HepG2 (cell line): ENCODE measurements at regions of chr4 and their contacts with region 1.

Region 1: DNA sequence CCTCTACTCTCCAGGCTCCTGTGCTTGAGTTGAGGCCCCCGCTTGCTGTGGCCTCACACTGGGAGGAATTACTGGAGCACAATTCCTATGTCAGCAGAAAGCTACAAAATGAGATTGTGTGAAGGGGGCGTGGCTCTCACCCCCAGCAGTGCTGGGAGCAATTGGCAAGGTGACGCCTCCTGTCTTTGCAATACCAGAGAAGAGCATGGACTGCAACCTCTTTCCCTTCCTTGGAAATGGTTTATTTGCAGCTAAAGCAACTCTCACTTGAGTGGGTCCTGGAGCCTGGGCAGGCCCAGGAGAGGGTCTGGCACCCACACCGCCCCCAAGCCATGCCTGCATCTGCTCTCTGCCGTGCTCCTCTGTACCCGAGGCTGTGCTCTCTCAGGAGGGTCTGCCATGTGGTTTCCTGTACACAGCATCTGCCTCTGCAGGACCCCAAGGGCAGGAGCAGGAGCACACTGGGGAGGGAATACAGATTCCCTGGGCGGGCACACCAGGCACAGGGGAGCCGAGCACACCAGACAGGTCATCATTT is 32.9 kb upstream of the HGFAC start:
- DNase-seq: no peak
- ATAC-seq: peak; percentile 26
- H3K4me3 ChIP-seq: no peak overlapping the region
- H3K27ac ChIP-seq: peak overlapping the region; percentile 96
- H3K4me1 ChIP-seq: peaks cover 50% of the 10 kb centered on the region
- H3K27me3 ChIP-seq: no peaks in the 10 kb centered on the region
- CTCF ChIP-seq: no peak
- EP300 ChIP-seq: no peak
- POLR2A ChIP-seq: no peak
- RAD21 ChIP-seq: no peak

Region 2: GRCh38 chr4:3355266-3355748 is 53.6 kb before region 1 on chr4:
- CTCF ChIA-PET with region 1: no interaction called
- POLR2A ChIA-PET with region 1: interaction called, 25 read pairs
- in situ Hi-C with region 1: no loop called
- intact Hi-C with region 1: loop called (anchors 1 kb)
- DNase-seq: no peak
- ATAC-seq: no peak
- H3K4me3 ChIP-seq: peak overlapping the region in 1 of 3 experiments; percentile 49; a peak in 1 of 6 replicates
- H3K27ac ChIP-seq: peak overlapping the region; percentile 92
- H3K4me1 ChIP-seq: peaks cover 56% of the 10 kb centered on the region
- H3K27me3 ChIP-seq: no peaks in the 10 kb centered on the region
- CTCF ChIP-seq: no peak
- EP300 ChIP-seq: no peak
- POLR2A ChIP-seq: no peak
- RAD21 ChIP-seq: no peak

Region 3: DNA sequence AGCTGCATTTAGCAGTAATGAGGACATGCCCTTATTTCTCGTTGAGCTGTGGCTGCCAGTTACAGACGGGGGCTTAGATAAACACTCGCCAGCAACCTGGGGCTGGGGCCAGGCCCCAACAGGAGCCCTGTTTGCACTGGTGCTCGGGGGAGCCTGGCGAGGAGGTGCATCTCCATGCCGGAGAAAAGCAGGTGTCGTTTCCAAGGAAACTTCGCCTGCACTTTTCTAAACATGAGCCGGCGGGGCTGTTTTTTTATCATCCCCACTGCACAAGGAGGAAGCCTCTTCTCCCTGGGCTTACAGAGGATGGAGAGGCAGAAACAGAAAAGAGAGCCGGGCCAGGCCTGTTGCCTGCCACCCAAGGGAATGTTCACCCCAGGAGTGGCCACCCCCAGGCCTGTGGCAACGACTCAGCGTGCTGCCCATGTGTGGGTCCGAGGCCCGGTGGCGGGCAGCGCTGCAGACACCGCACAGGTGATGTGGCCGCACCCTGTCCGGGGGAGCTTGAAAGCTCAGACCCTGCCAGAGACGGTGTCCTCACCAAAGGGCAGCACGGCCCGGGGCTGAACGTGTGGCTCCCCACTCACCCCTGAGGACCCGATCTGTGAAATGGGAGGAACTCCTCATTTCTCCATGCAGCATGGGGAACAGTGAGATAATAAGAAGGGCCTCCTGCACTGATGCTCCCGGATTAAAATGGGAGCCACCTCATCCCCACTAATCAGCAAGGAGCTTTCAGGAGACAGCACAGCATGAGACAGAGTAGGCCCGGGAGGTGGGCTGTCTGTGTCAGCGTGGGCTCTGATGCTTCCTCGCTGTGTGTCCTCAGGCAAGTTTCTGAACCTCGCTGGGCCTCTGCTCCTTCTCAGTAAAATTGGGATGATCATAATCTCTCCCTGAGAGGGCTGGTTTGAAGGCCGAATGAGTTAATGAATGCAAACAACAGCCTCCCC is 323.5 kb after region 1 on chr4:
- CTCF ChIA-PET with region 1: no interaction called
- POLR2A ChIA-PET with region 1: no interaction called
- in situ Hi-C with region 1: no loop called
- intact Hi-C with region 1: no loop called
- DNase-seq: no peak
- ATAC-seq: no peak
- H3K4me3 ChIP-seq: no peak overlapping the region
- H3K27ac ChIP-seq: no peak overlapping the region
- H3K4me1 ChIP-seq: no peaks in the 10 kb centered on the region
- H3K27me3 ChIP-seq: peaks cover 8 to 67% of the 10 kb centered on the region in 2 experiments
- CTCF ChIP-seq: no peak
- EP300 ChIP-seq: no peak
- POLR2A ChIP-seq: no peak
- RAD21 ChIP-seq: no peak